Activated CD8-positive, alpha-beta T cell treated with anti-CD3 and anti-CD28 coated beads for 36 hours (primary cell): ENCODE measurements at regions of chr4 and their contacts with region 1.

Region 1: GRCh38 chr4:48109413-48110263 is 24.4 kb downstream of the TXK start:
- DNase-seq: no peak
- ATAC-seq: peak; percentile 78
- H3K4me3 Mint-ChIP-seq: no peak overlapping the region
- H3K27ac Mint-ChIP-seq: peak overlapping the region; percentile 65
- H3K4me1 Mint-ChIP-seq: peaks cover 61% of the 10 kb centered on the region
- H3K27me3 Mint-ChIP-seq: no peaks in the 10 kb centered on the region
- CTCF ChIP-seq: peak; percentile 73

Region 2: GRCh38 chr4:47721892-47722575 is 387.6 kb before region 1 on chr4:
- CTCF ChIA-PET with region 1: no interaction called
- POLR2A ChIA-PET with region 1: no interaction called
- intact Hi-C with region 1: no loop called
- DNase-seq: no peak
- ATAC-seq: no peak
- H3K4me3 Mint-ChIP-seq: no peak overlapping the region
- H3K27ac Mint-ChIP-seq: no peak overlapping the region
- H3K4me1 Mint-ChIP-seq: no peaks in the 10 kb centered on the region
- H3K27me3 Mint-ChIP-seq: peaks cover 22% of the 10 kb centered on the region
- CTCF ChIP-seq: no peak

Region 3: DNA sequence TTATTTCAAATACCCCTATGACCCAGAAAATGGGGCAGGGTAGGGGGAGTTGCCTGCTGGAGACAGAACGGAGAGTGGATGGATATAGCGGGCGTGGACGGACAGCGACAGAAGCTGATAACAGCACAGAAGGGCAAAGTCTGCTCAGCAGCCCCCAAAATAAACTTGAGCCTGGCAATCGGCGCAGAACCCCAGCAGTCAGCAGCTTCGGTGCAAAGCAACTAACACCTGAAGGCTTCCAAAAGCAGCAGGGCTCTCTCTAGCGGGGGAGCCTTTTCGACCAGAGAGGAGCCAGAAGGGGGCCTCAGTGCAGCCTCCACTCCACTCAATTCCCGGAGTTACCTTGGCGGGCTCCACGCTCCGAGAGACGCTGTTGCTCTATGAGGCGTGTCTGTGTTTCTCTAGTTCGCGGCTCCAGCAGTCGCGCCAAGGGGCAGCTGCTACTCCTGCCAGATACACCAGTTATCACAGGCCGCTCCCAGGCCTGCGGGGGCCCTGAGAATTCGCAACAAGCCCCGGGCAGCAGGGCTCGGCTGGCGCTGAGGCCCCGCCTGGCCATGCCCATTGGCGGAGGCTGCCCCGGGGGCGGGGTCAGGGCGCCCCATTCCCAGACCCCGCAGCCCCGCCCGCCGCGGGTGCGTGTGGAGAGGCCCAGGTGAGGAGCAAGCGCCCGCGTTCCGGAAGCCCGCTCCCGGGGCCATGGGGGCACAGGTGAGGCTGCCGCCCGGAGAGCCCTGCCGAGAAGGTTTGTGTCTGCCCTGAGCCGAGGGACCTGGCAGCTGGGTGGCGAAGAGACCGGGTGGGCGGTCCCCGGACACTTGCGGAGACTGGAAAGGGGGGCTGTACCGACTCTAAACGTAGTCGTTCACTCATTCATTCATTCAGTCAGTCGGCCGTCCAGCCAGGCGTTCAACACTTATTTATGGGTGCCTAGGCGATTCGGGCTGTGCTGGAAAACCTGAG is 93.2 kb before region 1 on chr4 and contains the starts of genes CNGA1 and NIPAL1:
- CTCF ChIA-PET with region 1: no interaction called
- POLR2A ChIA-PET with region 1: no interaction called
- intact Hi-C with region 1: no loop called
- DNase-seq: peak; percentile 69
- ATAC-seq: peak; percentile 89
- H3K4me3 Mint-ChIP-seq: peak within 1 kb of the TSS; percentile 79
- H3K27ac Mint-ChIP-seq: peak within 1 kb of the TSS; percentile 42
- H3K4me1 Mint-ChIP-seq: peaks cover 23% of the 10 kb centered on the region
- H3K27me3 Mint-ChIP-seq: peaks cover 17% of the 10 kb centered on the region
- CTCF ChIP-seq: no peak
- total RNA-seq, gene CNGA1: 0.50 TPM in 1 of 2 experiments, not detected in the other
- total RNA-seq, gene NIPAL1: 1.1 to 1.9 TPM

Region 4: GRCh38 chr4:48093949-48094550 is 15.6 kb before region 1 on chr4:
- CTCF ChIA-PET with region 1: interaction called, 32 read pairs
- POLR2A ChIA-PET with region 1: no interaction called
- intact Hi-C with region 1: no loop called
- DNase-seq: peak; percentile 71
- ATAC-seq: peak; percentile 99
- H3K4me3 Mint-ChIP-seq: no peak overlapping the region
- H3K27ac Mint-ChIP-seq: peak overlapping the region; percentile 65
- H3K4me1 Mint-ChIP-seq: peaks cover 26% of the 10 kb centered on the region
- H3K27me3 Mint-ChIP-seq: no peaks in the 10 kb centered on the region
- CTCF ChIP-seq: no peak

Region 5: DNA sequence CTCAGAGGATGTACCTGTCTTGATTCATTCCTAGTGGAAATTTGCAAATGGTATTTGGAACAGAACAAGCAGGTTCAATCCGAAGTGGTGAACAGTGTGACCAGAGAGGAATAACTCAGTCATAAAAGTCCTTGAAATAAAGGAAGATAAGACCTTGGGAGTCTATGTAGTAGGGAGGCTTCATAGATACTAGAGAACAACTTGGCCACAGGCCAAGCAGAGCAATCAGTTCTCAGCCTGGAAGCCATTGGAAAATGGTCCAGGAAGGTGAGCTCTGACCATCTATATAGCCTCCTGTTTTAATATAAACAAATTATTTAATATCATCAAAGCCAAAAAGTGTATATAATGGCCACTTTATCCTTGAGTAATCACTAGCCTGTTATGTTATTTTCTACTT is 13.1 kb after region 1 on chr4:
- CTCF ChIA-PET with region 1: interaction called, 39 read pairs
- POLR2A ChIA-PET with region 1: interaction called, 23 read pairs
- intact Hi-C with region 1: no loop called
- DNase-seq: no peak
- ATAC-seq: no peak
- H3K4me3 Mint-ChIP-seq: no peak overlapping the region
- H3K27ac Mint-ChIP-seq: no peak overlapping the region
- H3K4me1 Mint-ChIP-seq: peaks cover 69% of the 10 kb centered on the region
- H3K27me3 Mint-ChIP-seq: no peaks in the 10 kb centered on the region
- CTCF ChIP-seq: no peak

Region 6: GRCh38 chr4:48127682-48128394 is 18.2 kb after region 1 on chr4:
- CTCF ChIA-PET with region 1: interaction called, 39 read pairs
- POLR2A ChIA-PET with region 1: interaction called, 23 read pairs
- intact Hi-C with region 1: no loop called
- DNase-seq: peak; percentile 96
- ATAC-seq: peak; percentile 66
- H3K4me3 Mint-ChIP-seq: peak overlapping the region; percentile 90
- H3K27ac Mint-ChIP-seq: peak overlapping the region; percentile 99
- H3K4me1 Mint-ChIP-seq: peaks cover 89% of the 10 kb centered on the region
- H3K27me3 Mint-ChIP-seq: no peaks in the 10 kb centered on the region
- CTCF ChIP-seq: peak; percentile 63